Naive thymus-derived CD4-positive, alpha-beta T cell (primary cell): ENCODE measurements at regions of chrX and their contacts with region 1.

Region 1: GRCh38 chrX:150365051-150365989 is 2.2 kb downstream of the MAMLD1 start:
- DNase-seq: peak in 8 of 9 donors; percentile 19 to 79 (median 46)
- ATAC-seq: peak; percentile 61
- H3K4me3 ChIP-seq: peak overlapping the region; percentile 50
- H3K4me3 Mint-ChIP-seq: peak overlapping the region; percentile 81 to 96 (median 87)
- H3K27ac ChIP-seq: no peak overlapping the region
- H3K27ac Mint-ChIP-seq: peak overlapping the region in 4 of 9 donors; percentile 11 to 80 (median 42)
- H3K4me1 ChIP-seq: peaks cover 0 to 11% of the 10 kb centered on the region in 2 donors
- H3K4me1 Mint-ChIP-seq: peaks cover 0 to 32% (median 19%) of the 10 kb centered on the region in 7 donors
- H3K27me3 ChIP-seq: peaks cover 0 to 5% of the 10 kb centered on the region in 2 donors
- H3K27me3 Mint-ChIP-seq: peaks cover 0 to 22% (median 9%) of the 10 kb centered on the region in 5 donors

Region 2: DNA sequence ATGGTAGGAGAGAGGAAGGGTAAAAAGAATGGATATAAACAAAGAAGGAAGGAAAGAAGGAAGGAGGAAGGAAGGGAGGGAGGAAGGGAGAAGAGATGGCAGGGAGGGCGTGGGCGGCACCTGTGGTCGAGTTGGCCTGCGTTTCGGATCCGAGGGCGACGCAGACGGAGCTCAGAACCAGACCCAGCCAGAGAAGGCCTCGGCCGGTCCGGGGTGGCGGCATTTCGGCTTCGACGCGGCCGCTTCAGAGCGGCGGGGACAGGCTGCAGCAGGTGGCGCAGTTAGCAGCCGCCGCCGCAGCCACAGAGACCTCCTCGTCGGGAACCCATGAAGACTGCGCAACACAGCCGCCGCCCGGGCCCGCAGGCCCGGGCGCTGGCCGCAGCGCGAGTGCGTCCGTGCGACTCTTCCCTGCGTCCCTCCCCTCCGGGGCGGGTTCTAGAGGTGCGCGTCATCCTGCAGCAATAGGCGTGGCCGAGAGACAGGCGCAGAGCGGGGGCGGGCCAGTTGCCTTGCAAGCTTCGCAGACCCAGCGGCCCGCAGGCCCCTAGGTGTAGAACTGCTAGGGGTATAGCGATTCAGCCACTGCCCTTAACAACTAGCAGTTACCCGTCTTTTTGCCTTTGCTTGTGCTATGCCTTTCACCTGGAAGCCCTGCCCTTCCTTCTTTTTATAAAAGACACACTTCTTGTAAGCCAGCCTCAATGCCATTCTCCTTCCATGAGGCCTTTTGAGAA is 860.2 kb before region 1 on chrX and contains the start of gene IDS:
- CTCF ChIA-PET with region 1: no interaction called
- POLR2A ChIA-PET with region 1: no interaction called
- intact Hi-C with region 1: loop called in 1 of 2 experiments (anchors 10 kb)
- DNase-seq: peak; percentile 68 to 88 (median 81)
- ATAC-seq: peak; percentile 85
- H3K4me3 ChIP-seq: peak within 1 kb of the TSS; percentile 72
- H3K4me3 Mint-ChIP-seq: peak within 1 kb of the TSS; percentile 86 to 100 (median 91)
- H3K27ac ChIP-seq: peak within 1 kb of the TSS; percentile 98
- H3K27ac Mint-ChIP-seq: peak within 1 kb of the TSS; percentile 87 to 98 (median 94)
- H3K4me1 ChIP-seq: peaks cover 6 to 13% of the 10 kb centered on the region in 2 donors
- H3K4me1 Mint-ChIP-seq: peaks cover 14 to 42% (median 23%) of the 10 kb centered on the region in 7 donors
- H3K27me3 ChIP-seq: no peaks in the 10 kb centered on the region
- H3K27me3 Mint-ChIP-seq: peaks cover 0 to 8% (median 0%) of the 10 kb centered on the region in 5 donors
- total RNA-seq, gene IDS: 73.1 to 317 (median 133) TPM

Region 3: DNA sequence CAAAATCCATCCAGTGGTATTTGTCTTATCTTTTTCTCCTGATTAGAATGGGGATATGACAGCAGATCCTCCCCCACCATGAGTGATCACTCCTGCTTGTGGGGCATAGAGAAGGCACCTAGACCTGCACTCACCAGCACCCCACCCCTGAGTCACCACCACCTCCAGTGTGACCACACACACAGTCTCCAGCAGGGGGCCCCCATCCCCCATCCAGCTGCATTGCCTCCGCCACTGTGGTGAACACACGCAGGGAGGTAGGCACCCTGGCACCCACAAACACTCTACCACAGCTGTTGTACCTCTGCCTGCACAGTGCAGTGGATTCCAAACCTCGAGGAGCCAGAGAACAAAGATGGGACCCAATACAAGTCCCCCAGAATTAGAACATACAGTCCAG is 493.4 kb before region 1 on chrX:
- CTCF ChIA-PET with region 1: no interaction called
- POLR2A ChIA-PET with region 1: no interaction called
- intact Hi-C with region 1: loop called in 1 of 2 experiments (anchors 5 kb)
- DNase-seq: peak in 8 of 9 donors; percentile 7 to 63 (median 18)
- ATAC-seq: peak; percentile 84
- H3K4me3 ChIP-seq: no peak overlapping the region
- H3K4me3 Mint-ChIP-seq: no peak overlapping the region
- H3K27ac ChIP-seq: no peak overlapping the region
- H3K27ac Mint-ChIP-seq: peak overlapping the region in 1 of 9 donors; percentile 33
- H3K4me1 ChIP-seq: peaks cover 0 to 3% of the 10 kb centered on the region in 2 donors
- H3K4me1 Mint-ChIP-seq: peaks cover 0 to 6% (median 0%) of the 10 kb centered on the region in 7 donors
- H3K27me3 ChIP-seq: no peaks in the 10 kb centered on the region
- H3K27me3 Mint-ChIP-seq: peaks cover 4 to 28% (median 9%) of the 10 kb centered on the region in 5 donors

Region 4: DNA sequence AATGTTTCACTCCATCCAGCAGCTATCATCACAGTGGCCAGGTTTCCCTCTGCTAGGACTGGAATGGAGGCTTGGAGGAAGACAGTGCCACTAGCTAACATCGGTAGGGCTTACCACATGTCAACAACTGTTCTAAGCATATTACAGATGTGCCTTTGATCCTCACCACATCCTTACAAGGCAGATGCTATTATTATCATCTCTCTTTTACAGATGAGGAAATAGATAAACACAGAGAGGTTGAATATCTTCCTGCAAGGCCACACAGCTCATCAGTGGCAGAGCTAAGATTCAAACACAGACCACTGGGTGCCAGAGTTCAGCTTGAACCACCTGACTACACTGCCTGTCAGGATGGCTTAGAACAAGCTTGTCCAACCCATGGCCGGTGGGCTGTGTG is 45.2 kb after region 1 on chrX:
- CTCF ChIA-PET with region 1: no interaction called
- POLR2A ChIA-PET with region 1: no interaction called
- intact Hi-C with region 1: loop called in 1 of 2 experiments (anchors 1 kb)
- DNase-seq: peak in 6 of 9 donors; percentile 3 to 54 (median 31)
- ATAC-seq: peak; percentile 81
- H3K4me3 ChIP-seq: no peak overlapping the region
- H3K4me3 Mint-ChIP-seq: peak overlapping the region in 5 of 10 donors; percentile 17 to 71 (median 29)
- H3K27ac ChIP-seq: no peak overlapping the region
- H3K27ac Mint-ChIP-seq: peak overlapping the region in 4 of 9 donors; percentile 21 to 72 (median 38)
- H3K4me1 ChIP-seq: peaks cover 10 to 21% of the 10 kb centered on the region in 2 donors
- H3K4me1 Mint-ChIP-seq: peaks cover 0 to 47% (median 16%) of the 10 kb centered on the region in 7 donors
- H3K27me3 ChIP-seq: no peaks in the 10 kb centered on the region
- H3K27me3 Mint-ChIP-seq: peaks cover 0 to 3% (median 0%) of the 10 kb centered on the region in 5 donors

Region 5: GRCh38 chrX:150547375-150548115 is 182.2 kb after region 1 on chrX:
- CTCF ChIA-PET with region 1: no interaction called
- POLR2A ChIA-PET with region 1: no interaction called
- intact Hi-C with region 1: loop called in 1 of 2 experiments (anchors 5 kb)
- DNase-seq: peak in 1 of 9 donors; percentile 25
- ATAC-seq: peak; percentile 53
- H3K4me3 ChIP-seq: peak overlapping the region; percentile 43
- H3K4me3 Mint-ChIP-seq: peak overlapping the region; percentile 74 to 91 (median 82)
- H3K27ac ChIP-seq: peak overlapping the region; percentile 14
- H3K27ac Mint-ChIP-seq: peak overlapping the region in 7 of 9 donors; percentile 52 to 96 (median 82)
- H3K4me1 ChIP-seq: peaks cover 11 to 13% of the 10 kb centered on the region in 2 donors
- H3K4me1 Mint-ChIP-seq: peaks cover 10 to 35% (median 24%) of the 10 kb centered on the region in 7 donors
- H3K27me3 ChIP-seq: no peaks in the 10 kb centered on the region
- H3K27me3 Mint-ChIP-seq: no peaks in the 10 kb centered on the region

Region 6: GRCh38 chrX:150587585-150588503 is 222.5 kb after region 1 on chrX:
- CTCF ChIA-PET with region 1: interaction called, 3 read pairs
- POLR2A ChIA-PET with region 1: no interaction called
- intact Hi-C with region 1: loop called in 1 of 2 experiments (anchors 1 kb)
- DNase-seq: peak in 6 of 9 donors; percentile 16 to 53 (median 38)
- ATAC-seq: peak; percentile 55
- H3K4me3 ChIP-seq: no peak overlapping the region
- H3K4me3 Mint-ChIP-seq: no peak overlapping the region
- H3K27ac ChIP-seq: no peak overlapping the region
- H3K27ac Mint-ChIP-seq: no peak overlapping the region
- H3K4me1 ChIP-seq: no peaks in the 10 kb centered on the region
- H3K4me1 Mint-ChIP-seq: peaks cover 0 to 33% (median 25%) of the 10 kb centered on the region in 7 donors
- H3K27me3 ChIP-seq: no peaks in the 10 kb centered on the region
- H3K27me3 Mint-ChIP-seq: no peaks in the 10 kb centered on the region